ENCODE measurements at regions of chr5 and their contacts with region 1.

Region 1: GRCh38 chr5:88883059-88883835 is at the start of gene MEF2C:
- DNase-seq: peak; percentile 78
- H3K4me3 ChIP-seq: peak within 1 kb of the TSS; percentile 41 to 70 (median 49)
- H3K27ac ChIP-seq: peak within 1 kb of the TSS; percentile 83 to 89 (median 89)
- H3K4me1 ChIP-seq: peaks cover 0 to 51% (median 14%) of the 10 kb centered on the region in 4 donors
- H3K27me3 ChIP-seq: no peaks in the 10 kb centered on the region
- CTCF ChIP-seq: no peak
- EP300 ChIP-seq: no peak
- POLR2A ChIP-seq: peak; percentile 78
- total RNA-seq, gene MEF2C: 17.3 to 58.0 (median 23.5) TPM

Region 2: DNA sequence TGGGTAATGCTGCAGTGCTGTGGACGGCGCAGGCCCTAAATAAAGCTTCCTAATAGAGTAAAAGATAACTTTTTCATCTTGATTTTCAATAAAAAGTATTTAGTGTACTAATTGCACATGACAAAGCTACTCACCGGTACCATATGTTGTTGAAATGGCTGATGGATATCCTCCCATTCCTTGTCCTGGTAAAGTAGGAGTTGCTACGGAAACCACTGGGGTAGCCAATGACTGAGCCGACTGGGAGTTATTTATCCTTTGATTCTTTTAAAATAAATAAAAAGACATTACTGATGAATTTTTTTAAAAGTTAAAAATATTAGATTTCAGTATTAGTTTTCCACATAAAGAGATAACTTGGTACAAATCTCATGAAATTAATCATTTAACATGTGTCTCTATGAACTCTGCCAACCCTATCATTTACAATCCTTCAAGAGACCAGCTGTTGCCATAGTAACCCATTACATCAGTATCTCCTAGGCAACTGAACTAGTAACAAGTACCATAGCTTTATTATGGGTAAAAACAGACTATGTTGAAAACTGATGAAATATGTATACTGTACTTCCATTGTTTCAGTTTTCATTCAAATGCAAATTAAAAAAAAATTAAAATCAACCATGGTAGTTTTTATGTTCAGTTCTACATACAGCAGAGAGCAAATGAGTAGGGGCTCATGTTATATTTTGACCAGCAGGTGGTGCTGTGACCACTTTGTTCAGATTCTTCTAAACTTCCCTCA is 154.0 kb before region 1 on chr5:
- in situ Hi-C with region 1: loop called in 2 of 4 experiments (anchors 10 to 25 kb)
- intact Hi-C with region 1: no loop called
- DNase-seq: peak; percentile 77
- H3K4me3 ChIP-seq: no peak overlapping the region
- H3K27ac ChIP-seq: no peak overlapping the region
- H3K4me1 ChIP-seq: peaks cover 0 to 17% (median 0%) of the 10 kb centered on the region in 4 donors
- H3K27me3 ChIP-seq: no peaks in the 10 kb centered on the region
- CTCF ChIP-seq: peak; percentile 75 to 86 (median 79)
- EP300 ChIP-seq: no peak
- POLR2A ChIP-seq: no peak

Region 3: GRCh38 chr5:88940713-88941112 is 57.5 kb after region 1 on chr5:
- in situ Hi-C with region 1: no loop called
- intact Hi-C with region 1: loop called (anchors 10 kb)
- DNase-seq: no peak
- H3K4me3 ChIP-seq: no peak overlapping the region
- H3K27ac ChIP-seq: no peak overlapping the region
- H3K4me1 ChIP-seq: peaks cover 3 to 34% (median 10%) of the 10 kb centered on the region in 4 donors
- H3K27me3 ChIP-seq: no peaks in the 10 kb centered on the region
- CTCF ChIP-seq: no peak
- EP300 ChIP-seq: no peak
- POLR2A ChIP-seq: no peak

Region 4: DNA sequence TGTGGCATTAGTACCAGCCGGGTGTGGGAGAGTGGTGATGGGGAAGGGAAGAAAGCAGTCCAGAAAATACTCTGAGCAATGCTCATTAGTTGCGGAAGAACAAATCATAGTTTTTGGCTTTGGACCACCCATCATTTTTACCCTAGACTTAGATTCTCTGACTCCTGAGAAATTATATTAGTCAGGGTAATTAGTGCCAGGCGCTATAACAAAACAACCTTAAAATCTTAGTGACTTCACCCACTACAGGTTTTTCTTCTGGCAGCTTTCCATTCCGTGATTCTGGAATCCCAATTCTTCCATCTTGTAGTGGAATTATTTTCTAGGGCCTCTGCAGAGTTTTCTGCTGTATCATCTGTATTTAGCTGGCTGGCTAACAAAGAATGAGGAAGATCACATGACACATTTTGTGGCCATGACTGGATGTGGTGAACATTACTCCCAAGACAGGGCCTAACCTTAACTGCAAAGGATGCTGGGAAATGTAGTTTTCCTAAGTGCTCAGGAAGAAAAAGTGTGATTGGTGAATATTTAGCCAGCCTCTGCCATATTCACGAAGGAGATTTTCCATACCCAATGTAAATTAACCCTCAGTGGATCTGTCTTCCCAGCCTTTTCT is 372.7 kb after region 1 on chr5:
- in situ Hi-C with region 1: no loop called
- intact Hi-C with region 1: no loop called
- DNase-seq: no peak
- H3K4me3 ChIP-seq: no peak overlapping the region
- H3K27ac ChIP-seq: no peak overlapping the region
- H3K4me1 ChIP-seq: no peaks in the 10 kb centered on the region
- H3K27me3 ChIP-seq: no peaks in the 10 kb centered on the region
- CTCF ChIP-seq: no peak
- EP300 ChIP-seq: no peak
- POLR2A ChIP-seq: no peak